CD4-positive, alpha-beta memory T cell (primary cell): ENCODE measurements at regions of chr2 and their contacts with region 1.

Region 1: GRCh38 chr2:208175069-208175839 is 11.9 kb upstream of the CRYGA start:
- DNase-seq: peak; percentile 42 to 51 (median 45)
- H3K4me3 ChIP-seq: no peak overlapping the region
- H3K4me3 Mint-ChIP-seq: no peak overlapping the region
- H3K27ac ChIP-seq: no peak overlapping the region
- H3K27ac Mint-ChIP-seq: no peak overlapping the region
- H3K4me1 ChIP-seq: no peaks in the 10 kb centered on the region
- H3K4me1 Mint-ChIP-seq: peaks cover 3 to 5% (median 4%) of the 10 kb centered on the region in 4 donors
- H3K27me3 ChIP-seq: no peaks in the 10 kb centered on the region
- H3K27me3 Mint-ChIP-seq: peaks cover 9 to 19% of the 10 kb centered on the region in 2 donors

Region 2: DNA sequence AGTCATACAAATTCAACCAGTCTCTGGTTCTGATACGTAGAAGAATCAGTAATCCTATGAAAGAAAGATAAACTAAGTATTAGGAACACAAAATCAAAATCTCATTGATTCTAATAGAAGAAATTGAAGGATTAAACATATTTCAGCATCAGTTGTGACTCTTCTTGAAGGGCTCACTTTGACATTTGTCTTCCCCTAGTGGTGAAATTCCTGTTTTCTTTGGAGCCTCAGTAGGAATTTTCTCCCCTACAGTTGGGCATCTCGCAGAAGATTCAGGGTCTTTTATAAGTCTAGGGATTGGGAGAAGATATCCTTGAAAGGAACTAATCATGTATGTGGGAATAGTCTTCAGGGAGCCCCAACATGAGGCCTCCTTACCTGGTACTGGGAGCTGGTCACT is 26.5 kb before region 1 on chr2:
- CTCF ChIA-PET with region 1: interaction called, 12 read pairs
- POLR2A ChIA-PET with region 1: no interaction called
- intact Hi-C with region 1: no loop called
- DNase-seq: no peak
- H3K4me3 ChIP-seq: no peak overlapping the region
- H3K4me3 Mint-ChIP-seq: no peak overlapping the region
- H3K27ac ChIP-seq: no peak overlapping the region
- H3K27ac Mint-ChIP-seq: no peak overlapping the region
- H3K4me1 ChIP-seq: no peaks in the 10 kb centered on the region
- H3K4me1 Mint-ChIP-seq: no peaks in the 10 kb centered on the region
- H3K27me3 ChIP-seq: no peaks in the 10 kb centered on the region
- H3K27me3 Mint-ChIP-seq: peaks cover 7 to 13% of the 10 kb centered on the region in 2 donors

Region 3: DNA sequence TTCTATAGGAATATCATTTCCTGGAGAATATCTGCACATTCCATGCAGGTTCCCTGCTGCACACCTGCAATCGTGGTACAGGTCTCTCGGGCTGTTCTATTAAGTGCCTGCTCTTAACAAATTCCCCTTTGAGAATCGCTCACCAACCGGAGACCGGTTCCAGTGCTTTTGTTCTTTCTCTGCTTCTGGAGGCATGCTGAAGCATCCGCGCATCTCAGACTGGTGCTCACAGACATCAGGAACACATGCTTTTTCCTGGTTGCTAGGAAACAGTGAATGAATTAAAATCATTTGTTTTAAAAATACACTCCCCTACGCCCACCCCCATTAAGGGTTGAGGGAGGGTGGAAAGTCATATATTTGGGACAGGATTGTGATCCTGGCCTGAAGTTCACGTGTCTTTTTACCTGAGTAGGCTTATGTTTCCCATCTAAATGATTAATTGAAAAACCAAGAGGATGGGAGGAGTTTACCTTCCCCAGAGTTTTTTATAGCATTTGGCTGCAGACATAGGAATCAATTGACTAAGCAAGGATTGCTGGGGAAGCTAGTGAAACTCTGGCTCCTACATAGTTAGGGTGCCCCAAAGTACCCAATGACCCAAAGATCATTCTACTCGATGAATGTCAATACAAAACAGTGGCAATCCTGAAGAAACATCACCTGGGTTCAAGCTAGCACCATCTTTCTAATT is 14.7 kb after region 1 on chr2 and contains the start of gene C2orf80:
- CTCF ChIA-PET with region 1: interaction called, 23 read pairs
- POLR2A ChIA-PET with region 1: no interaction called
- intact Hi-C with region 1: no loop called
- DNase-seq: no peak
- H3K4me3 ChIP-seq: no peak within 1 kb of the TSS
- H3K4me3 Mint-ChIP-seq: no peak within 1 kb of the TSS
- H3K27ac ChIP-seq: no peak within 1 kb of the TSS
- H3K27ac Mint-ChIP-seq: no peak within 1 kb of the TSS
- H3K4me1 ChIP-seq: no peaks in the 10 kb centered on the region
- H3K4me1 Mint-ChIP-seq: no peaks in the 10 kb centered on the region
- H3K27me3 ChIP-seq: no peaks in the 10 kb centered on the region
- H3K27me3 Mint-ChIP-seq: peaks cover 6% of the 10 kb centered on the region in 2 donors
- total RNA-seq, gene C2orf80: not detected

Region 4: GRCh38 chr2:208265801-208266552 is 90.7 kb after region 1 on chr2 and contains the start of gene PIKFYVE:
- CTCF ChIA-PET with region 1: interaction called, 10 read pairs
- POLR2A ChIA-PET with region 1: no interaction called
- intact Hi-C with region 1: no loop called
- DNase-seq: peak; percentile 80 to 92 (median 87)
- H3K4me3 ChIP-seq: peak within 1 kb of the TSS; percentile 51 to 95
- H3K4me3 Mint-ChIP-seq: peak within 1 kb of the TSS; percentile 92 to 99 (median 96)
- H3K27ac ChIP-seq: peak within 1 kb of the TSS; percentile 75
- H3K27ac Mint-ChIP-seq: peak within 1 kb of the TSS; percentile 86 to 97 (median 95)
- H3K4me1 ChIP-seq: peaks cover 46% of the 10 kb centered on the region
- H3K4me1 Mint-ChIP-seq: peaks cover 27 to 60% (median 39%) of the 10 kb centered on the region in 4 donors
- H3K27me3 ChIP-seq: no peaks in the 10 kb centered on the region
- H3K27me3 Mint-ChIP-seq: no peaks in the 10 kb centered on the region
- total RNA-seq, gene PIKFYVE: 44.5 to 45.8 TPM

Region 5: GRCh38 chr2:208373460-208374089 is 198.3 kb after region 1 on chr2:
- CTCF ChIA-PET with region 1: no interaction called
- POLR2A ChIA-PET with region 1: no interaction called
- intact Hi-C with region 1: loop called (anchors 1 kb)
- DNase-seq: peak in 4 of 5 donors; percentile 6 to 13 (median 9)
- H3K4me3 ChIP-seq: no peak overlapping the region
- H3K4me3 Mint-ChIP-seq: no peak overlapping the region
- H3K27ac ChIP-seq: no peak overlapping the region
- H3K27ac Mint-ChIP-seq: no peak overlapping the region
- H3K4me1 ChIP-seq: no peaks in the 10 kb centered on the region
- H3K4me1 Mint-ChIP-seq: no peaks in the 10 kb centered on the region
- H3K27me3 ChIP-seq: no peaks in the 10 kb centered on the region
- H3K27me3 Mint-ChIP-seq: peaks cover 1 to 10% of the 10 kb centered on the region in 2 donors